ENCODE measurements at regions of chr19 and their contacts with region 1.

Region 1: DNA sequence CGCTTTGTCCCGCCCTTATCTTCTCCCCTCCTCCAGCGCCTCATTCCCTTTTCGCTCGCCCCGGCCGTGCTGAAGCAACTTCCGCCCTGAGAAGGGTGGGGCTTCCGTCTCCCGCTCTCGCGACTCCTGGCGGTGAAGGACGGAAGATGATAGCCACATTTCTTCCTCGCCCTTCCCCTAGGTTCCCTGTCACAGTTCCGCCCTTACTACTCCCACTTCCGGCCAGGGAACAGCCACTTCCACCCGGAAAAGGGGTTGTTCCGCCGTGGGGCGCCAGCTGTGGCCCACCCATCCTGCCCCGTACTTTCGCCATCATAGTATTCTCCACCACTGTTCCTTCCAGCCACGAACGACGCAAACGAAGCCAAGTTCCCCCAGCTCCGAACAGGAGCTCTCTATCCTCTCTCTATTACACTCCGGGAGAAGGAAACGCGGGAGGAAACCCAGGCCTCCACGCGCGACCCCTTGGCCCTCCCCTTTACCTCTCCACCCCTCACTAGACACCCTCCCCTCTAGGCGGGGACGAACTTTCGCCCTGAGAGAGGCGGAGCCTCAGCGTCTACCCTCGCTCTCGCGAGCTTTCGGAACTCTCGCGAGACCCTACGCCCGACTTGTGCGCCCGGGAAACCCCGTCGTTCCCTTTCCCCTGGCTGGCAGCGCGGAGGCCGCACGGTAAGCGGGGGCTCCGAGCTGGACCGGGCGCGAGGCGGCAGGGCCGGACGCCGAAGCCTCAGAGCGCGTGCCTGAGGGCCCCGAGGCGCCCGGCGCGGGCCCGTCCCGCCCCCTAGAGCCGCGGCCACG is at the start of gene RPS19:
- DNase-seq: peak; percentile 97 to 99 (median 98)
- H3K4me3 ChIP-seq: peak within 1 kb of the TSS; percentile 82 to 86
- H3K4me3 Mint-ChIP-seq: peak within 1 kb of the TSS; percentile 89 to 98 (median 94)
- H3K27ac ChIP-seq: peak within 1 kb of the TSS; percentile 96
- H3K27ac Mint-ChIP-seq: peak within 1 kb of the TSS; percentile 91 to 100 (median 98)
- H3K4me1 ChIP-seq: peaks cover 50% of the 10 kb centered on the region
- H3K4me1 Mint-ChIP-seq: peaks cover 34 to 56% (median 42%) of the 10 kb centered on the region in 4 donors
- H3K27me3 ChIP-seq: no peaks in the 10 kb centered on the region
- H3K27me3 Mint-ChIP-seq: no peaks in the 10 kb centered on the region
- total RNA-seq, gene RPS19: 3,807 to 4,015 TPM

Region 2: DNA sequence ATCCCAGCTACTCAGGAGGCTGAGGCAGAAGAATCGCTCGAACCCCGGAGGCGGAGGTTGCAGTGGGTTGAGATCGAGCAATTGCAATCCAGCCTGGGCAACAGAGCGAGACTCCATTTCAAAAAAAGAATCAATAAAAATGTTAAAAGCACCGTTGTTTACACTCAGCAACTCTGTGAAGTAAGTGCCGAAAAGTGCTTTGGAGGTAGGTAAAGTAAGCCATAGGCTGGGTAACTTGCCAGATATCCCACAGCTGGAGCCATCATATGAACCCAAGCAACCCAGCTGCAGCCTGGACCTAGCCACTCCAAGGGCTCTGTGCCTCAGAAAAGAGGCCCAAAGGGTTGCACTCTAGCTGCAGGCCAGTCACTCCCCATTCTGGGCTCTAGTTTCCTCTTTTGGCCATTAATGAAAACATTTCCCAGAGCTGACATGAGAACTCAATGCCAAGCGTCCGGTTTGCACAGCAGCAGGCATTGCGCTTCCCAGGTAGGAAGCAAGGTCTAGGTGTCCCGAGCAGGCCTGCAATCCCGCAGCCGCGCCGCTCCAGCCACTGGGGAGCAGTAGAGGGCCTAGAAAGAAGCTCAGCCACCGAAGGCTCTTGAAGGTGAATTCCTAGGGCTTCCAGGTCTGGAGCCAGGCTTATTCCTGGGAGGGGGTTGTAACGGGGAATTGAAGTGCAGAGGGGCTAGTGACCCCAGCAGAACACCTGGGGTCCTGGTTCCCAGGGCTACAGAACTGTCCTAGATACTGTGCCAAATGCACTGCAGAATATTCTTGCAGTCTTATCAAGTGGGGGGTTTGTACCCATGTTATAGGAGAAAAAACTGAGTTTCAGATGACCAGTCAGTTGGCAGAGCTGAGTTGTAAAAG is 13.2 kb after region 1 on chr19:
- CTCF ChIA-PET with region 1: interaction called, 125 read pairs
- POLR2A ChIA-PET with region 1: interaction called, 261 read pairs
- intact Hi-C with region 1: loop called (anchors 1 kb)
- DNase-seq: peak; percentile 59 to 70 (median 63)
- H3K4me3 ChIP-seq: no peak overlapping the region
- H3K4me3 Mint-ChIP-seq: peak overlapping the region; percentile 26 to 85 (median 68)
- H3K27ac ChIP-seq: peak overlapping the region; percentile 66
- H3K27ac Mint-ChIP-seq: peak overlapping the region; percentile 92 to 99 (median 95)
- H3K4me1 ChIP-seq: peaks cover 98% of the 10 kb centered on the region
- H3K4me1 Mint-ChIP-seq: peaks cover 45 to 97% (median 68%) of the 10 kb centered on the region in 4 donors
- H3K27me3 ChIP-seq: no peaks in the 10 kb centered on the region
- H3K27me3 Mint-ChIP-seq: no peaks in the 10 kb centered on the region

Region 3: DNA sequence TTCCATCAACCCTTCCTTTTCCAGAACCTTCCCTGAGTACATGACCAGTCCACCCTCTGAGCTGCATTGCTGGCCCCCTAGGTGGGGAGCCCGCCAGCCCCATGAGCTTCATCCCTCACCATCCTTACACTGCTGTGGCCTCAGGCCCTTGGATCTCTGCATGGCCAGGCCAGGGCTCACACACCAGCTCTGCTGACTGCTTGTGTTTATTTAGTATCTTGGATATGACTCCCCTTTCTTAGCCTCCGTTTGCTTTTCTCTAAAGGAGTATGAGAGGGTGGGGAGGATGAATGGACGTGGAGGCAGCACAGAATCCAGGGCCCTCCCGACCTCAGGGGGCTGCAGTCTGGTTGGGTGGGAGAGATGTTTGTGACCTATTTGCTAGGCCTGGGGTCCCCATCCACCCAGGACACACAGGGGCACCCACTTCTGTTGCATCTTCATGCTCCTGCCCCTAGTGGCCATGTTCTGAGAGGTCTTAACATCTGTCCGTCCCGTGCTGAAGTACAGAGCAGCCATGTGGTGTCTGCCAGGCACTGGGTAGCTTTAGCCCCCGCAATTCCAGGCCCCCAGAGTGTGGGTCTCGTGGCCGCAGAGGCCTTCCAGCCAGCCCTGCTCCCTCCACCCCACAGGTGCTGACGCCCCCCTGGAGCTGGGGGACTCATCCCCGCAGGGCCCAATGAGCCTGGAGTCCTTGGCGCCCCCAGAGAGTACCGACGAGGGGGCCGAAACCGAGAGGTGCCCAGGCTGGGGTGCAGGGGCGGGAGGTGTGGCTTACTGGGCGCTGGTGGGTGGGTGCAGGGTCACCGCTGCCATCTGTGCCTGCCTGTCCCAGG is 36.1 kb after region 1 on chr19:
- CTCF ChIA-PET with region 1: interaction called, 4 read pairs
- POLR2A ChIA-PET with region 1: interaction called, 246 read pairs
- intact Hi-C with region 1: no loop called
- DNase-seq: no peak
- H3K4me3 ChIP-seq: no peak overlapping the region
- H3K4me3 Mint-ChIP-seq: peak overlapping the region in 4 of 8 donors; percentile 10 to 49 (median 42)
- H3K27ac ChIP-seq: peak overlapping the region; percentile 16
- H3K27ac Mint-ChIP-seq: peak overlapping the region; percentile 46 to 90 (median 85)
- H3K4me1 ChIP-seq: peaks cover 52% of the 10 kb centered on the region
- H3K4me1 Mint-ChIP-seq: peaks cover 23 to 62% (median 36%) of the 10 kb centered on the region in 4 donors
- H3K27me3 ChIP-seq: no peaks in the 10 kb centered on the region
- H3K27me3 Mint-ChIP-seq: no peaks in the 10 kb centered on the region

Region 4: GRCh38 chr19:41912899-41913537 is 53.2 kb after region 1 on chr19:
- CTCF ChIA-PET with region 1: interaction called, 3 read pairs
- POLR2A ChIA-PET with region 1: interaction called, 16 read pairs
- intact Hi-C with region 1: no loop called
- DNase-seq: peak in 2 of 5 donors; percentile 39 to 43
- H3K4me3 ChIP-seq: no peak overlapping the region
- H3K4me3 Mint-ChIP-seq: peak overlapping the region in 4 of 8 donors; percentile 9 to 57 (median 32)
- H3K27ac ChIP-seq: no peak overlapping the region
- H3K27ac Mint-ChIP-seq: peak overlapping the region in 3 of 7 donors; percentile 43 to 75 (median 67)
- H3K4me1 ChIP-seq: peaks cover 45% of the 10 kb centered on the region
- H3K4me1 Mint-ChIP-seq: peaks cover 25 to 51% (median 26%) of the 10 kb centered on the region in 4 donors
- H3K27me3 ChIP-seq: peaks cover 23% of the 10 kb centered on the region
- H3K27me3 Mint-ChIP-seq: peaks cover 7 to 14% of the 10 kb centered on the region in 2 donors

Region 5: DNA sequence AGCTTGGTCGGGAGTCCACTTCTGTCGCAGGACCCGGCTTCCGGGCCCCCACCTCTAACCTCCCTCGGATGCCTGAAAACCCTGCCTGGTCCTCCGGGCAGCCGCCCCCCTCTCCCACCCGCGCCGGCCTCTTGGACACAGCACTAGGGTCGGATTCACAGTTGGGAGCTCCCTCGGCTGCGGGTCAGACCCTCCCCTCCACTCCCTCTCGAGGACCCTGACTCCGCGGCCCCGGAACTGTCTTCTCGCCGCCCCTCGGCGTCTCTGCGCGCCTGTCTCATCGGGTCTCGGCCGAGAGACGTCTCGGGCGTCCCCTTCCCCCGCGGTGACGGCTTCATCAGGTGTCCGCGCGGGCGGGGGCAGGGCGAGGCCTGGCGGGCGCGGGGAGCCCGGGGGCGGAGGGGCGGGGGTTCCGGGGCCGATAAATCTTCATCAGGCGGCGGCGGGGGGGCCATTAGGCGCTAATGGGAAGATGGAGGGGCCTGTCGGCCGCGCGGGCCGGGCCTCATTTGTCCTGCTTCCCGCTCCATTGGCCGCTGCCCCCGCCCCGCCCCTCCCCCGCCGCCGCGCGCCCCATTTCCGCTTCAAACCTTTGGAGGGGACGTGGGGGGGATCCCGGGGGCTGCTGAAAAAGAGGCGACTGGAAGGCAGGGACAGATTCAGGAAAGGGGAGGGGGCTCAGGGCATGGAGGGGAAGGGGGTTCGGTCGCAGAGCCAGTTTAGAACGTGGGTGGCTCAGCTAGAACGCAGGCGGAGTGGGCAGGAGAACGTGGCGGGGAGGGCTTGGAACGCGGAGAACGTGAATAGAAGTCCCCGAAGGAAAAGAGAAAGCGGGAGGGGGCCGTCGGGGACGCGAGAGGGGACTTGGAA is 80.3 kb after region 1 on chr19:
- CTCF ChIA-PET with region 1: interaction called, 85 read pairs
- POLR2A ChIA-PET with region 1: interaction called, 56 read pairs
- intact Hi-C with region 1: no loop called
- DNase-seq: peak in 2 of 5 donors; percentile 28 to 55
- H3K4me3 ChIP-seq: peak overlapping the region in 1 of 2 donors; percentile 43
- H3K4me3 Mint-ChIP-seq: peak overlapping the region; percentile 84 to 90 (median 86)
- H3K27ac ChIP-seq: no peak overlapping the region
- H3K27ac Mint-ChIP-seq: peak overlapping the region; percentile 57 to 93 (median 90)
- H3K4me1 ChIP-seq: peaks cover 35% of the 10 kb centered on the region
- H3K4me1 Mint-ChIP-seq: peaks cover 17 to 53% (median 34%) of the 10 kb centered on the region in 4 donors
- H3K27me3 ChIP-seq: no peaks in the 10 kb centered on the region
- H3K27me3 Mint-ChIP-seq: peaks cover 1 to 5% of the 10 kb centered on the region in 2 donors

Region 6: GRCh38 chr19:41951686-41952172 is 91.9 kb after region 1 on chr19:
- CTCF ChIA-PET with region 1: interaction called, 85 read pairs
- POLR2A ChIA-PET with region 1: interaction called, 57 read pairs
- intact Hi-C with region 1: loop called (anchors 1 kb)
- DNase-seq: peak; percentile 72 to 83 (median 76)
- H3K4me3 ChIP-seq: no peak overlapping the region
- H3K4me3 Mint-ChIP-seq: peak overlapping the region in 2 of 8 donors; percentile 5 to 42
- H3K27ac ChIP-seq: no peak overlapping the region
- H3K27ac Mint-ChIP-seq: peak overlapping the region; percentile 42 to 90 (median 81)
- H3K4me1 ChIP-seq: peaks cover 12% of the 10 kb centered on the region
- H3K4me1 Mint-ChIP-seq: peaks cover 10 to 30% (median 15%) of the 10 kb centered on the region in 4 donors
- H3K27me3 ChIP-seq: no peaks in the 10 kb centered on the region
- H3K27me3 Mint-ChIP-seq: no peaks in the 10 kb centered on the region

Region 7: DNA sequence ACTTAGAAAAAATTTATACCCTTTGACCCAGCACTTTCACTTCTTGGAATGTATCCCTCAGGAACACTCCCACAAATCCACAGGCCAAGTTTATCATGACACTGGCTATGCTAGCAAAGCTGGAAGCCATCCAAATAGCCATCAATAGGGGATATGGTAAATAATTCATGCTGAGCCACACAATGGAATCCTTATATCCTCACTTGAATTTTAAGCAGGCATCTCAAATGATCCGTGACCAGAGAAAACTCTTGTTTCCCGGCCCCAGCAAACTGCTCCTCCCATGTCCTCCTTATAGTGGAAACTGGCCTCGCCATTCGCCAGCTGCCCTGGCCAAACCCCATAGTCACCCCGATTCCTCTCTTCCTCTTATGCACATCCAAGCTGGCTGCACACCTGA is 172.6 kb after region 1 on chr19:
- CTCF ChIA-PET with region 1: interaction called, 7 read pairs
- POLR2A ChIA-PET with region 1: interaction called, 3 read pairs
- intact Hi-C with region 1: loop called (anchors 2 kb)
- DNase-seq: no peak
- H3K4me3 ChIP-seq: no peak overlapping the region
- H3K4me3 Mint-ChIP-seq: no peak overlapping the region
- H3K27ac ChIP-seq: no peak overlapping the region
- H3K27ac Mint-ChIP-seq: no peak overlapping the region
- H3K4me1 ChIP-seq: no peaks in the 10 kb centered on the region
- H3K4me1 Mint-ChIP-seq: peaks cover 0 to 4% (median 2%) of the 10 kb centered on the region in 4 donors
- H3K27me3 ChIP-seq: no peaks in the 10 kb centered on the region
- H3K27me3 Mint-ChIP-seq: peaks cover 8 to 12% of the 10 kb centered on the region in 2 donors